SK-N-SH (cell line): ENCODE measurements at regions of chr18 and their contacts with region 1.

Region 1: DNA sequence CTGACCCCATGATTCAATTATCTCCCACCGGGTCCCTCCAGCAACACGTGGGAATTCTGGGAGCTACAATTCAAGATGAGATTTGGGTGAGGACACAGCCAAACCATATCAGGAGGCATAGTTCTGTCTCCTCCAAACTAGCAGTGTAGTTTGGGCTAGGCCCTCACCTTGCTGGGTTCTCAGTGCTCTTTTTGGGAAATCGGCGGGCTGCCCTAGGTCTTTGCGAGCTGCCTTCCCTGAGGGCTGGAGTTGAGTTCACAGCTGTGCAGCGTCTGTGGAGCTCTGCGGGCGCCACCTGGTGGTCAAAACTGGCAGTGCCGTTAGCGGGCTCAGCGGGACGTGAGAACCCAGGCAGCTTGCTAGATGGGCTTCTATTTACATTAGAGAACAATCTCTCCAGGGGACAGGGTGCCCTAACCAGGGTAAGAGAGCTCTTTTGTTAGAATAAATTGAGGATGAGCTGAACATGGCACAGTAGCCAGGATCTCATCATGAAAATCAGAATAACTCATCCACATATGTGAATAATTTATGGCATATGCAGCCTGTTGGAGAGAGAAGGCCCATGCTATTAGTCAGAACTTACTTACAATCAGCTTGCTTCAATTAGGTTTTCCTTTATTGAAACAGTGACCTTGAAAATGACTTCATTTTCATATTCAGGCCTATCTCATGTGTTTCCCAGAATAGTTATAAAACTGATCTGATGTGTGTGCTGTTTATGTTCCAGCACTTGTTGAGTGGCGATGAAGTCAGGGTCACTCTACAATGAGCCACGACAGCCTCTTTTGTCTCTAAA is 27.4 kb upstream of the YES1 start:
- DNase-seq: peak; percentile 83
- H3K4me3 ChIP-seq: peak overlapping the region in 1 of 2 experiments; percentile 18; a peak in 2 of 4 replicates
- H3K27ac ChIP-seq: peak overlapping the region; percentile 3 to 60; a peak in 2 of 4 replicates
- H3K4me1 ChIP-seq: no peaks in the 10 kb centered on the region; a peak in 2 of 4 replicates
- H3K27me3 ChIP-seq: no peaks in the 10 kb centered on the region; the same call in 1 of the 2 replicates
- CTCF ChIP-seq: peak; percentile 99
- EP300 ChIP-seq: no peak
- RAD21 ChIP-seq: peak; percentile 69

Region 2: DNA sequence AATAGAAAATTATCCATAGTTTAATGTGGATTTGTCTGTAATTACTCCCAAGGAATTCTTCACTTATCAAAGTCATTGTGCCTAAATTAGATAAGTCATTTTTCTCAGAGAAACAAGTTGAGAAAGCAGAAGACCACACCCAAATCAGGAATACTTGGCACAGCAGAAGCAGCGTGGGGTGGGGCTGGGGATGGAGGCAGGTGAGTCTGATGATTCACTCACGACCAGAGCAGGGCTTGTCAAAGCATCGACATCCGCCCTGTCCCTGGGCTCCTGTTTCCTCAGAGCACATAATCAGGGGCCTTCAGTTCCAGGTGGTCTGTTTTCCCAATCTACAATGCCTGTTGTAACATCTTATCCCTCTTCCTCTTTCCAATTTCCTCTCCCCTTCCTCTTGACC is 307.4 kb before region 1 on chr18:
- CTCF ChIA-PET with region 1: no interaction called
- POLR2A ChIA-PET with region 1: no interaction called
- DNase-seq: no peak
- H3K4me3 ChIP-seq: no peak overlapping the region
- H3K27ac ChIP-seq: no peak overlapping the region
- H3K4me1 ChIP-seq: no peaks in the 10 kb centered on the region; a peak in 1 of 4 replicates
- H3K27me3 ChIP-seq: no peaks in the 10 kb centered on the region
- CTCF ChIP-seq: no peak
- EP300 ChIP-seq: no peak
- RAD21 ChIP-seq: no peak

Region 3: GRCh38 chr18:607930-608329 is 231.5 kb before region 1 on chr18:
- CTCF ChIA-PET with region 1: no interaction called
- POLR2A ChIA-PET with region 1: no interaction called
- DNase-seq: no peak
- H3K4me3 ChIP-seq: no peak overlapping the region
- H3K27ac ChIP-seq: no peak overlapping the region
- H3K4me1 ChIP-seq: no peaks in the 10 kb centered on the region
- H3K27me3 ChIP-seq: no peaks in the 10 kb centered on the region; the same call in 1 of the 2 replicates
- CTCF ChIP-seq: no peak
- EP300 ChIP-seq: no peak
- RAD21 ChIP-seq: no peak

Region 4: DNA sequence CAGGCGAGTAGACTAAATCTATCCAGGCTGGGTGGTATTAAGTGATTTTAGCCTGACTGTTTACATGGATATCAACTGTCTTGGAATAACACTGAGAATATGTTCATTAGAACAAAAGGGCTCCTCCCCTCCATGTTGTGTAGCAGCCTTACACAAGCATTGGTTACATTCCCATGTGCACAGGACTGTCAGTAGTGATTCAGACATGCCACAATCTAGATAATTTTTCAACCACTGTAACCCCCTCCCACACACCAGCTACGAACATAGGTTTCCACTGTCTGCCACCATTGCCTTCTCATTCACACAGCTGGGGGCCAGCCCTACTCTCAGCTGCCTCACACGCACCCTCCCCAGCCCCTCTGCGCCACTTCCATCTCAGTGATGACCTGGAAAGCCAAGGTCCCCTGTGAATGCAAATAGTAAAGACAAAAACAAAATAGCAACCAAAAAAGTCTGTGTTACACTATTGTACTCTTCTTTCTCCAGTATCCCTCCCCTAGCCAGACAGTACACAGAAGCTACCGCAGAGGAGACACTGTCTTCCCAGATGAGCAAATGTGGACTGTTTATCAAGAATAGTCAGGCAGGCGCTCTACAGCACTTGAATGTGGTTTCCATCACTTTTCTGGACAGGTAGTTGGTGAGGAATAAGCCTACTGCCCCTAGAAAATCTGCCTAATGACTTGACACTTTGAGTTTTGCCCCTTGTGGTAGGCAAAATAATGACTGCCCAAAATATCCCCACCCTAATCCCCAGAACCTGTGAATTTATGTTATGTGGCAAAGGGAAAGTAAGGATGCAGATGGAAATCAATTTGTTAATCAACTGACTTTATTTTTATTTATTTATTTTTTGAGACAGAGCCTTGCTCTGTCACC is 209.9 kb before region 1 on chr18:
- CTCF ChIA-PET with region 1: interaction called, 149 read pairs
- POLR2A ChIA-PET with region 1: no interaction called
- DNase-seq: no peak
- H3K4me3 ChIP-seq: no peak overlapping the region
- H3K27ac ChIP-seq: no peak overlapping the region
- H3K4me1 ChIP-seq: no peaks in the 10 kb centered on the region
- H3K27me3 ChIP-seq: no peaks in the 10 kb centered on the region; the same call in 1 of the 2 replicates
- CTCF ChIP-seq: peak; percentile 20; the same call in 1 of the 2 replicates
- EP300 ChIP-seq: no peak
- RAD21 ChIP-seq: no peak

Region 5: DNA sequence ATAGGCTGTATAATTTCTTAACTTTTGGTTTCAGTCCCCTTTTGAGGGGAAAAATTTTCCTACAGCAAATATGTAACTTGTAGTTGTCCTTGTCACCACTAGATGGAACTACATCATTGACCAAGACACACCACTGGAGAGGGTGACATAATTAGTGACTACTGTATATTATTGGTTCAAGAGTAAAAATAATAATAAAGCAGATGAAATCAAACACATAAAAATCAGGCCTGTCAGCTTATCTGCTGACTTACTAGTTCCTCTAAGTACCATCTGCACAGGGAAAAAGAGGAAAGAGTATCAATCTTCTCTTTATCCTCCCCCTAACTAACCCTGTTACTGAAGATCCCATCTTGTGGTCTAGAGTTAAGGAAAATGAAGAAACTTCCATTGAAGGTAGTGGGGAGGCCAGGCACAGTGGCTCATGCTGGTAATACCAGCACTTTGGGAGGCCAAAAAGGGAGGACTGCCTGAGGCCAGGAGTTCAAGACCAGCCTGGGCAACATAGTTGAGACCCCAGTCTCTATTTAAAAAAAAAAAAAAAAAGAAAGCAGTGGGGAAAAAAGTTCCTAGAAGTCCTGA is 97.4 kb before region 1 on chr18:
- CTCF ChIA-PET with region 1: interaction called, 119 read pairs
- POLR2A ChIA-PET with region 1: no interaction called
- DNase-seq: peak; percentile 61
- H3K4me3 ChIP-seq: peak overlapping the region in 1 of 2 experiments; percentile 9; a peak in 1 of 4 replicates
- H3K27ac ChIP-seq: no peak overlapping the region
- H3K4me1 ChIP-seq: no peaks in the 10 kb centered on the region; a peak in 1 of 4 replicates
- H3K27me3 ChIP-seq: no peaks in the 10 kb centered on the region
- CTCF ChIP-seq: peak; percentile 82
- EP300 ChIP-seq: no peak
- RAD21 ChIP-seq: peak; percentile 83

Region 6: DNA sequence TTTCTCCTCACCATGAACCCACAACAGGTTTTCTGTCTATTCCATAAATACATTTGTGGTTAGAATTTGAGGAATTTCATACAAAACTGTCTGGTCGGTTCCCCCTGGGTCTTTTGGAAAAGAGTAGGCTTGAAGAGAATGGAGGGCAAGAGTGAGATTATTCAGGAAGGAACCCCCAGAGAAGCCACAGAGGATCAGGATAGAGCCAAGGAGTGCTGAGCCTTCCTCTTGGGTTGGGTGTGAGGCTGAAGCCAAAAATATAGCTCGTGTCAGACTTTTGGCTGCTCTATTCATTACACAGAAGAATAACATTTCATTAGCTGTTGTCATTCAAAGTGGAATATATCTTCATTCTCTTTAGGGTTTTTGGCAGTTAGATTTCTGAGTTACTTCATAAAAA is 18.6 kb after region 1 on chr18:
- CTCF ChIA-PET with region 1: interaction called, 20 read pairs
- POLR2A ChIA-PET with region 1: no interaction called
- DNase-seq: no peak
- H3K4me3 ChIP-seq: no peak overlapping the region
- H3K27ac ChIP-seq: no peak overlapping the region
- H3K4me1 ChIP-seq: no peaks in the 10 kb centered on the region
- H3K27me3 ChIP-seq: peaks cover 19% of the 10 kb centered on the region; the same call in 1 of the 2 replicates
- CTCF ChIP-seq: no peak
- EP300 ChIP-seq: no peak
- RAD21 ChIP-seq: no peak